Activated CD4-positive, alpha-beta T cell treated with anti-CD3 and anti-CD28 coated beads for 36 hours (primary cell): ENCODE measurements at regions of chr15 and their contacts with region 1.

Region 1: GRCh38 chr15:57146506-57147201 is 228.2 kb downstream of the TCF12 start:
- DNase-seq: peak; percentile 9
- ATAC-seq: no peak
- H3K4me3 Mint-ChIP-seq: no peak overlapping the region
- H3K27ac Mint-ChIP-seq: no peak overlapping the region
- H3K4me1 Mint-ChIP-seq: peaks cover 6% of the 10 kb centered on the region
- H3K27me3 Mint-ChIP-seq: no peaks in the 10 kb centered on the region

Region 2: DNA sequence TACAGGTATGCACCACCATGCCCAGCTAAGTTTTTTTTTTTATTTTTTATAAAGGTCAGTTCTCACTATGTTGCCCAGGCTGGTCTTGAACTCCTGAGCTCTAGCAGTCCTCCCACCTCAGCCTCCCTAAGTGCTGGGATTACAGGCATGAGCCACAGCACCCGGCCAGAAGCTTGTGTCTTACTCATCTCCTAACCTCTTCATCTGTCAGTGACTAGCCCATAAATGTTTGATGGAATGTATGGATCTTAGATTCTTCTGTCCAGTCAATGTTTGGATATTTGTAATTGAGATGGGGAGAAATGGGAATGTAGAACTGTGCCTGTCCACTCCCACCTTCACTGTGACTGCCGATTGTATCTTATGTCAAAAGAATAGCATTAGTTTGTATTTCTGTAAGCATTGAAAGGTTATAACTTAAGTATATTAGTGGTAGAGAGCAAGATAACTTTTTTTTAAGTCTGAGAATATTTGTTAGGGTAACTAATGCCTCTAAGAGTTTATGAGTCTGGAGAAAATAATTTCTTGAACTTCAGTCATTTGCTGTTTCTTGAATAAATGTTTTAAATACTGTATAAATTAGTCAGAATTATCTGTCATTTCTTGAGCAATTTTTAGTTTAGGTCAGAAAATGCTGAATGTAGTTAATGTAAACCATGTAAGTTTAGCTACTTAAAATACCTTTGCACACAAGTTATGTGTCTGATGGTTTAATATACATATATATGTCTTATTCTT is 14.3 kb after region 1 on chr15:
- CTCF ChIA-PET with region 1: interaction called, 11 read pairs
- POLR2A ChIA-PET with region 1: no interaction called
- intact Hi-C with region 1: no loop called
- DNase-seq: no peak
- ATAC-seq: no peak
- H3K4me3 Mint-ChIP-seq: no peak overlapping the region
- H3K27ac Mint-ChIP-seq: no peak overlapping the region
- H3K4me1 Mint-ChIP-seq: no peaks in the 10 kb centered on the region
- H3K27me3 Mint-ChIP-seq: no peaks in the 10 kb centered on the region

Region 3: DNA sequence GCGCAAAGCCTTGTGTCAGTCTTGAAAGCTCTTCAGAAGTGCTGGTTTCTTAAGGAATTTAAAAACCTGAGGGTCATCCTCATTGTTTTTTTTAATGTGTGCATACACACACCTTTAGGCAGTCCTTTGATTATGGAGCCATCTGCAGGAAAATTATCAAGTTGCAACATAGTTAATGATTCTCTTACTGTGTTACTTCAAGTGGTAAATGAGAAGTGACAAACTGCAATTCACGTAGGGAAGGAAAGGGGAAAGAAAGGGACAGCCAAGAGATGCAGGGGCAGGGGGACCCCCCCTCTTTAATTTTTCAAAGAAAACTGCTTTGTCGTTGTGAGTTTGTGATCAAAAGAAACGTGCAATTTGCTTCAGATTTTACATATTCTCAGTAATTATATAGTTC is 67.2 kb after region 1 on chr15:
- CTCF ChIA-PET with region 1: interaction called, 16 read pairs
- POLR2A ChIA-PET with region 1: no interaction called
- intact Hi-C with region 1: loop called (anchors 2 to 5 kb)
- DNase-seq: no peak
- ATAC-seq: no peak
- H3K4me3 Mint-ChIP-seq: no peak overlapping the region
- H3K27ac Mint-ChIP-seq: no peak overlapping the region
- H3K4me1 Mint-ChIP-seq: peaks cover 20% of the 10 kb centered on the region
- H3K27me3 Mint-ChIP-seq: no peaks in the 10 kb centered on the region

Region 4: GRCh38 chr15:57323806-57324589 is 177.3 kb after region 1 on chr15:
- CTCF ChIA-PET with region 1: no interaction called
- POLR2A ChIA-PET with region 1: no interaction called
- intact Hi-C with region 1: no loop called
- DNase-seq: peak; percentile 51
- ATAC-seq: peak; percentile 81
- H3K4me3 Mint-ChIP-seq: no peak overlapping the region
- H3K27ac Mint-ChIP-seq: no peak overlapping the region
- H3K4me1 Mint-ChIP-seq: peaks cover 5% of the 10 kb centered on the region
- H3K27me3 Mint-ChIP-seq: peaks cover 4% of the 10 kb centered on the region